ENCODE measurements at regions of chr5 and their contacts with region 1.

Region 1: DNA sequence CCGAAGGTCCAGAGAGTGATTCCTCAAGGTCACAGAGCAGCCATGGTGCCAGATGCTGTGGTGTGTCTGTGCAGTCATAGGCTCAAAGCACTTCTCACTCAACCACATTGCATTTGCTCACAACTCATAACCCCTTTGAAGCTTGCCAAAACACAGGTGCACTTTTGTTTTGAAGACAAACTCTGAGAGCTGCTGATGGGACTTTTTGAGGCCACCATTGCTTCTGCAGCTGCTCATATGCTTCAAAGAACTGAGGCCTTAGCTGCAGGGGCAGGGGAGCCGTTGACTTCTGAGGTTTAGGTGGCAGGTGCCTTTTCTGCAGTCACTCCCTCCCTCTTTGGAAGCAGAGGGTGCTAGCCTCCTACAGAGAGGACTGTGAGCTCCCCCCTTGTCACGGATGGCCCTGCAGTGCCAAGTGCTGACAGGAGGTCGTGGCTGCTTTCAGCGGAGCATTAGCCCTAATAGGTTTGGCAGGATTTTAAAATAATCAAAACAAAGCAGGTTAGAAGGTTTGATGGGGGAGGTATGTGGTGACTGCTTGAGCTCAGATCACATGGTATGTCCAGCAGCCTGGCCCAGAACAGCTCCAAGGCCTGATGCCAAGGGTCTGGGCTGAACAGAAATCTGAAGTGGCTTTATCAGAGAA is 232.1 kb downstream of the MAN2A1 start:
- DNase-seq: peak; percentile 37 to 91 (median 65)
- ATAC-seq: peak; percentile 83
- H3K4me3 ChIP-seq: peak overlapping the region in 1 of 2 experiments; percentile 19
- H3K4me3 Mint-ChIP-seq: peak overlapping the region; percentile 73
- H3K27ac ChIP-seq: peak overlapping the region; percentile 36 to 41
- H3K27ac Mint-ChIP-seq: peak overlapping the region; percentile 93
- H3K4me1 ChIP-seq: peaks cover 43% of the 10 kb centered on the region
- H3K4me1 Mint-ChIP-seq: peaks cover 63% of the 10 kb centered on the region
- H3K27me3 ChIP-seq: no peaks in the 10 kb centered on the region
- H3K27me3 Mint-ChIP-seq: no peaks in the 10 kb centered on the region
- CTCF ChIP-seq: no peak

Region 2: DNA sequence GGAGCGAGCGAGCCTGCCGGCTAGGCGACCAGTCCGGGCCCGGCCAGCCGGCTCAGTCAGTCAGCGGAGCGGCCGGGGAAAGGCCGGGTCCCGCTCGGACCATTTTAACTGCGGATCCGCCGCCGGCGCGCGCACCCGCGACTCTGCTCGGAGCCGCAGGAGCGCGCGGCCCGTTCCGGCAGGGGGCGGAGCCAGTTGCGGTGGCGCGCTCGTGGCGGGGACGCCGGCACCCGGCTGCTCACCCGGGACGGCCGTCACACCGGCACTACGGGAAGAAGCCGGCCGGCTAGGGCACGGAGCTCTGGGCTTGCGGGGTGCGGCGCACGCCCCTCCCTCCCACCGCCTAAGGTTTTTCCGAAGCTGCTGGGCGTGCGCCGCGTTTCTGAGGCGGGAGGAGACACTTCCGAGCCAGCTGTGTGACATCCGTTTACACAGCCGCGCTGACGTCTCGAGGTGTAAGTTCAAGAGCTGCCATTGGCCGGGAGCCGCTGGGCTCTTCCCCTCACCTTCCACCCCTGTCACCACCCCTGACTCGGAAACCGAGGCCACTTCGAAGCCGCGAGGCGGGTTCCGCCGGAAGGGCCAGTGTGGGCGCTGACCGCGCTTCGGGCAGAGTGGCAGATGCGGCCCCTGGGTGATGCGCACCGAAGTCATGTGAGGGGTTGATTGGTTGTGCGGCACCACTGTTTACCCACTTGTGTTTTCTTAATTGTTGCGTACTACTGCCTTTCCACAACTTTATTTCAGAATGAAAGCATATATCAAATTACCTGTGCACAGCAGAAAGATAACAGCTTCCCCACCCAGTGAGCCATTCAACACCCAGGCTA is 1539.7 kb before region 1 on chr5 and contains the start of gene FBXL17:
- CTCF ChIA-PET with region 1: no interaction called
- POLR2A ChIA-PET with region 1: no interaction called
- intact Hi-C with region 1: loop called in 1 of 2 experiments (anchors 5 kb)
- DNase-seq: peak; percentile 83 to 97 (median 90)
- ATAC-seq: peak; percentile 75
- H3K4me3 ChIP-seq: peak within 1 kb of the TSS; percentile 59 to 63
- H3K4me3 Mint-ChIP-seq: peak within 1 kb of the TSS; percentile 94
- H3K27ac ChIP-seq: peak within 1 kb of the TSS; percentile 84 to 86
- H3K27ac Mint-ChIP-seq: peak within 1 kb of the TSS; percentile 99
- H3K4me1 ChIP-seq: peaks cover 11% of the 10 kb centered on the region
- H3K4me1 Mint-ChIP-seq: peaks cover 36% of the 10 kb centered on the region
- H3K27me3 ChIP-seq: no peaks in the 10 kb centered on the region
- H3K27me3 Mint-ChIP-seq: no peaks in the 10 kb centered on the region
- CTCF ChIP-seq: no peak
- total RNA-seq, gene FBXL17: 13.5 to 17.9 TPM

Region 3: DNA sequence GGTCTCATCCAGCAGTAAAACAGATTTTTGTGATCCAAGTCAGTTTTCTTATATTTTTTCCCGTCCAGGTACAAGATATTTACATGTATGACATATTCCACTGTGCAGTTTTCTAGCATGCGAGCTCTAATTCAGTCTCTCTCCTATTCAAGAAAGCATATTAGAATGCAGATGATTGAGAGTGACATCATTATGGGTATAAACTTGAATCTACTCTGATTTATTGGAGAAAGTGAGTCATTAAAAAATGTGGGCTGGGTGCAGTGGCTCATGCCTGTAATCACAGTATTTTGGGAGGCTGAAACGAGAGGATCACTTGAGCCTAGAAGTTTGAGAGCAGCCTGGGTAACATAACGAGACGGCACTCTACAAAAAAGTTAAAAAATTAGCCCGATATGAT is 1168.0 kb before region 1 on chr5:
- CTCF ChIA-PET with region 1: no interaction called
- POLR2A ChIA-PET with region 1: no interaction called
- intact Hi-C with region 1: loop called in 1 of 2 experiments (anchors 5 kb)
- DNase-seq: no peak
- ATAC-seq: no peak
- H3K4me3 ChIP-seq: no peak overlapping the region
- H3K4me3 Mint-ChIP-seq: no peak overlapping the region
- H3K27ac ChIP-seq: no peak overlapping the region
- H3K27ac Mint-ChIP-seq: no peak overlapping the region
- H3K4me1 ChIP-seq: no peaks in the 10 kb centered on the region
- H3K4me1 Mint-ChIP-seq: peaks cover 6% of the 10 kb centered on the region
- H3K27me3 ChIP-seq: no peaks in the 10 kb centered on the region
- H3K27me3 Mint-ChIP-seq: no peaks in the 10 kb centered on the region
- CTCF ChIP-seq: no peak

Region 4: DNA sequence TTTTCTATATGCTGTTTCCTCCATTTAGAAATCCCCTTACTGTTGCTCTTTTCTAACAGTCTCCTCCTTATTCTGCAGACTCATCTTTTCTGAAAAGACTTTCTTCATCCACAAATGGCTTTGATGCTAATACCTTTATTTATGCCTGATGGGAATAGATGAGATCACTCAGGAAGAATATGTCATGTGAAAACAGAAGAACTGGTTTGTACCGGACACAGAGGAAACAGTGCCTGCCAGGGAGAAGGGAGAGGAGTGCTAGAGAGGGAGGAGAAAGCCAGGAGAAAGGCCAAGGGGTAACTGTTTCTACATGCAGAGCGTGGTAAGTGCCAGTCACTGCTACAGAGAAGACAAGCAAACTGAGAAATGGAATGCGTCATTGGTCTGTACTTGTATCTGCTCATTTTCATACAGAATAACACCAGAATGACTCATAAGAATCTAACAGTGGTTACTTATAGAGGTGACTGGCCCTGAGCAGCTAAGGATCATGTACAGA is 466.2 kb before region 1 on chr5:
- CTCF ChIA-PET with region 1: no interaction called
- POLR2A ChIA-PET with region 1: no interaction called
- intact Hi-C with region 1: no loop called
- DNase-seq: no peak
- ATAC-seq: peak; percentile 48
- H3K4me3 ChIP-seq: no peak overlapping the region
- H3K4me3 Mint-ChIP-seq: no peak overlapping the region
- H3K27ac ChIP-seq: no peak overlapping the region
- H3K27ac Mint-ChIP-seq: no peak overlapping the region
- H3K4me1 ChIP-seq: no peaks in the 10 kb centered on the region
- H3K4me1 Mint-ChIP-seq: no peaks in the 10 kb centered on the region
- H3K27me3 ChIP-seq: no peaks in the 10 kb centered on the region
- H3K27me3 Mint-ChIP-seq: peaks cover 6% of the 10 kb centered on the region
- CTCF ChIP-seq: no peak

Region 5: DNA sequence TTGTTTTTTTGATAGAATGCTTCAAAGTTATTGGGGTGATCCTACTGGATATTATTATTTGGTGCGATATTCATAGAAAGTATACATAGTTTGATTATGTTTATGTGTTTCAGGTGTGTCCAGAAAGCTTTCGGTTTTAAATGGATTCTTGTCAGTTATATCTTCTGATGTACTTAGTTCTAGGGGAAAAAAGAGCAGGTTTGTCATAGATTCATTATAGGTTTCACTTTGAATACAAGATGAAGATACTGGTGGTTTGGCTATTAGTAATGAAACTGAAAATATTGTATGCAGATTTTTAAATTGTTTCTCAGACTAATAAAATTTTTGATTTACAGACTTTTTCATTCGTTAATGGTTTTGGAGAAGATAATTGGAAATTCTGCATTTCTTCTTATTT is 133.3 kb before region 1 on chr5:
- CTCF ChIA-PET with region 1: no interaction called
- POLR2A ChIA-PET with region 1: no interaction called
- intact Hi-C with region 1: no loop called
- DNase-seq: no peak
- ATAC-seq: no peak
- H3K4me3 ChIP-seq: no peak overlapping the region
- H3K4me3 Mint-ChIP-seq: no peak overlapping the region
- H3K27ac ChIP-seq: no peak overlapping the region
- H3K27ac Mint-ChIP-seq: no peak overlapping the region
- H3K4me1 ChIP-seq: no peaks in the 10 kb centered on the region
- H3K4me1 Mint-ChIP-seq: peaks cover 15% of the 10 kb centered on the region
- H3K27me3 ChIP-seq: no peaks in the 10 kb centered on the region
- H3K27me3 Mint-ChIP-seq: no peaks in the 10 kb centered on the region
- CTCF ChIP-seq: no peak

Region 6: GRCh38 chr5:109852371-109853155 is 69.3 kb before region 1 on chr5:
- CTCF ChIA-PET with region 1: interaction called, 5 read pairs
- POLR2A ChIA-PET with region 1: interaction called, 4 read pairs
- intact Hi-C with region 1: loop called (anchors 5 kb)
- DNase-seq: peak in 2 of 9 experiments; percentile 31 to 49
- ATAC-seq: peak; percentile 45
- H3K4me3 ChIP-seq: no peak overlapping the region
- H3K4me3 Mint-ChIP-seq: peak overlapping the region; percentile 24
- H3K27ac ChIP-seq: peak overlapping the region in 1 of 2 experiments; percentile 36
- H3K27ac Mint-ChIP-seq: peak overlapping the region; percentile 76
- H3K4me1 ChIP-seq: peaks cover 84% of the 10 kb centered on the region
- H3K4me1 Mint-ChIP-seq: peaks cover 87% of the 10 kb centered on the region
- H3K27me3 ChIP-seq: no peaks in the 10 kb centered on the region
- H3K27me3 Mint-ChIP-seq: no peaks in the 10 kb centered on the region
- CTCF ChIP-seq: no peak

Region 7: GRCh38 chr5:109876941-109877650 is 44.8 kb before region 1 on chr5:
- CTCF ChIA-PET with region 1: no interaction called
- POLR2A ChIA-PET with region 1: interaction called, 9 read pairs
- intact Hi-C with region 1: loop called in 1 of 2 experiments (anchors 2 kb)
- DNase-seq: no peak
- ATAC-seq: no peak
- H3K4me3 ChIP-seq: no peak overlapping the region
- H3K4me3 Mint-ChIP-seq: no peak overlapping the region
- H3K27ac ChIP-seq: no peak overlapping the region
- H3K27ac Mint-ChIP-seq: no peak overlapping the region
- H3K4me1 ChIP-seq: peaks cover 31% of the 10 kb centered on the region
- H3K4me1 Mint-ChIP-seq: peaks cover 44% of the 10 kb centered on the region
- H3K27me3 ChIP-seq: no peaks in the 10 kb centered on the region
- H3K27me3 Mint-ChIP-seq: no peaks in the 10 kb centered on the region
- CTCF ChIP-seq: no peak

Region 8: GRCh38 chr5:110031402-110032140 is 109.7 kb after region 1 on chr5:
- CTCF ChIA-PET with region 1: interaction called, 3 read pairs
- POLR2A ChIA-PET with region 1: interaction called, 4 read pairs
- intact Hi-C with region 1: loop called in 1 of 2 experiments (anchors 5 kb)
- DNase-seq: peak in 7 of 9 experiments; percentile 6 to 57 (median 43)
- ATAC-seq: peak; percentile 40
- H3K4me3 ChIP-seq: no peak overlapping the region
- H3K4me3 Mint-ChIP-seq: no peak overlapping the region
- H3K27ac ChIP-seq: no peak overlapping the region
- H3K27ac Mint-ChIP-seq: peak overlapping the region; percentile 70
- H3K4me1 ChIP-seq: peaks cover 8% of the 10 kb centered on the region
- H3K4me1 Mint-ChIP-seq: peaks cover 40% of the 10 kb centered on the region
- H3K27me3 ChIP-seq: no peaks in the 10 kb centered on the region
- H3K27me3 Mint-ChIP-seq: no peaks in the 10 kb centered on the region
- CTCF ChIP-seq: no peak

Region 9: DNA sequence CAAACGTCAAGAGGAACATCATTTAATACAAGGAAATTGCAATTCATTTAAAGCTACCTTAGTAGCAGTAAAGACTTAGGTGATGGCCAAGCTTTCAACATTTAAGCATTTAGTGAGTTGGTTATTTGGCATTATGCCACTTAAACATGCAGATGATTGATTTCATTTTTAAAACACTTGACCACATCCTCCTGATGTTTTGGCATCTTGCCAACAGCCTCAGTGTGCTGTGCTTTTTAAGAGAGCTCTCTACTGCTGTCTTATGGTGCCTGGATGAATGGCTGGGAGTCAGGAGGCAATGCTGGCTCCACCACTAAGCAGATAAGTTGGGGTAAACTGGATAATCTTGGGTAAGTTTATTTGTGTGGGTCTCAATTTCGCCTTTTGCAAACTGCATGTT is 132.4 kb after region 1 on chr5:
- CTCF ChIA-PET with region 1: interaction called, 16 read pairs
- POLR2A ChIA-PET with region 1: interaction called, 13 read pairs
- intact Hi-C with region 1: loop called (anchors 1 to 5 kb)
- DNase-seq: peak; percentile 46 to 95 (median 71)
- ATAC-seq: peak; percentile 93
- H3K4me3 ChIP-seq: no peak overlapping the region
- H3K4me3 Mint-ChIP-seq: peak overlapping the region; percentile 24
- H3K27ac ChIP-seq: peak overlapping the region in 1 of 2 experiments; percentile 44
- H3K27ac Mint-ChIP-seq: peak overlapping the region; percentile 85
- H3K4me1 ChIP-seq: peaks cover 29% of the 10 kb centered on the region
- H3K4me1 Mint-ChIP-seq: peaks cover 43% of the 10 kb centered on the region
- H3K27me3 ChIP-seq: no peaks in the 10 kb centered on the region
- H3K27me3 Mint-ChIP-seq: no peaks in the 10 kb centered on the region
- CTCF ChIP-seq: peak; percentile 62